Activated naive CD4-positive, alpha-beta T cell treated with anti-CD3 and anti-CD28 coated beads for 36 hours (primary cell): ENCODE measurements at regions of chr4 and their contacts with region 1.

Region 1: GRCh38 chr4:169416997-169417396 is 146.2 kb upstream of the SH3RF1 start:
- DNase-seq: no peak
- H3K4me3 Mint-ChIP-seq: no peak overlapping the region
- H3K27ac Mint-ChIP-seq: no peak overlapping the region
- H3K4me1 Mint-ChIP-seq: peaks cover 16% of the 10 kb centered on the region
- H3K27me3 Mint-ChIP-seq: no peaks in the 10 kb centered on the region

Region 2: GRCh38 chr4:169270810-169271691 is 145.9 kb before region 1 on chr4 and contains the start of gene SH3RF1:
- CTCF ChIA-PET with region 1: no interaction called
- intact Hi-C with region 1: loop called (anchors 2 kb)
- DNase-seq: peak; percentile 49
- H3K4me3 Mint-ChIP-seq: peak within 1 kb of the TSS; percentile 77
- H3K27ac Mint-ChIP-seq: no peak within 1 kb of the TSS
- H3K4me1 Mint-ChIP-seq: peaks cover 3% of the 10 kb centered on the region
- H3K27me3 Mint-ChIP-seq: peaks cover 49% of the 10 kb centered on the region
- total RNA-seq, gene SH3RF1: 0.22 to 0.55 TPM